Posterior vena cava (tissue), 2 donors: ENCODE measurements at regions of chr1 and their contacts with region 1.

Region 1: GRCh38 chr1:201108614-201109013 is 3.6 kb downstream of the CACNA1S start:
- DNase-seq: no peak

Region 2: DNA sequence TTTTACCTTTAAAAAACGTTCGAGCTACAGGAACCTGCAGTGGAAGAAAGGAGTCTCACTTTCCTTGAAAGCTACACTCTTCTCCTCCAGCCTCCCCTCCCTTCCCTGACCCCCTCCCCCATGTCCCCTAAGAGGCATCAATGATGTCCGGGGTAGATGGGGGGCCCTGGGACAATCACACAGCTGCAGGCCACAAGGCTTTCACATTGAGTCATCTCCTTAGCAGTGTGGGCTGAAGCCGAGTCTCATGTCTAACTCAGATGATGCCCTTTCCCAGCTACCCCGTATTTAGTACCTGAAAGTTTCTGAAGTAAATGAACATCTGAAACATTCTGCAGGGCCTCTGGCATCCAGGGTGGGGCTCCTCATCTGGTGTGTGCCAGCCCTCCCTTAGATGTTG is 242.1 kb before region 1 on chr1:
- intact Hi-C with region 1: no loop called
- DNase-seq: no peak

Region 3: DNA sequence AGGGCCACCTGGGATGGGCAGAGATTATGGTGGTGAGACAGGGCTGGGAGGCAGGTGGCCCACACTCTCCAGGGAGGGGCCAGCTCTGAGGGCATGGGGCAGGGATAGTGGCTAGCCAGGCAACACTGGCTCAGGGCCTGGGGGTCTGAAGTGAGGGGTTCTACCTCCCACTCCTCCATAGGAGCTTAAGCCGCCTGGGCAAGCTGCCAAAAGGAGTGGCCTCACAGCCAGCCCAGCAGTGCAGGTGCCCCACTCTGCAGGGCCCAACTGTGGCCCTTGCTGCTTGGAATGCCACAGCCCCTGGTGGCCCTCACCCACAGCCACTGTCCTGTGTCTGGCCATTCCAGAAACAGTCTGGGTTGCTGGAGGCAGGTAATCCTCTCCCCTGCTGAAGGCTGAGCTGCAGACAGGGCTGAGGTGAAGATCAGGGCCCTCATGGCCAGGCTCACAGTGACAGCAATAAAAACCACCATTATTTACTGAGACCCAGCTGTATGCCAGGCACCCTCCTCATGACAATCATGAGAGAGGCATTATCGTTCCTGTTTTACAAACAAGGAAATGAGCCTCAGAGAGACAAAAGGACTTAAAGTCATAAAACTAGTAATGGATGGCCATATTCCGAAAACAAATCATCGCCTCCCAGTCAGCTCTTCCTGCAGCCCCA is 116.1 kb before region 1 on chr1:
- intact Hi-C with region 1: loop called in 1 of 2 experiments (anchors 1 kb)
- DNase-seq: no peak

Region 4: DNA sequence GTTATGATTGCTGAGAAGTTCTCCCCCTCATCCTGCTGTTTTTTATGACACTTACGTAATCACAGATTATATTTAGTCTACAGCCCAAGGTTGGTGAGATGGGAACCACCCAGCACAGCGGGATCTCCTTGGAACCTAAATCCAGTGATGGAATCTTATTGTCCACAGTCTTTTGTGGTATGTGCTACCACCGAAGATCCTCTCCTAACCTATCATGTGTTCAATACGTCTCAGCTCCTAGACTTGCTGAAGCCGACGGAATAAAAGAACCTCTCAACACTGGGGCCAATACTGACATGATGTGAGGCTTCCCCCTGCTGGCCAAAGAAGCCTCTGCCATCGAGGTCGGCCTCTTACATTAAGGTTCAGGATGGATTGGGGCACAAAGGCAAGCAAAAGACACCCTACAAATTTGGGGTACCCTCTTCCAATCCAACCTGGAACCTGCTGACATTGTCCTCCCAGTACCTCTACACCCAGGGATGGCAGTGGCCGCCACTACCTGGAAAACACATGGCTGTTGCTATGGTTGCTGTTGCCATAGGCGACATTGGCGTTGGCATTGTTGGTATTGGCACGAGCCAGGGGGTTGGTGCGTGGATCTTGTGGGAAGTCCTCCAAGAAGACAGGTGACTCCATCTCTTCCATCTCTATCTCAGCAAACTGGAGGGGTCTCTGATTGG is 65.7 kb before region 1 on chr1:
- intact Hi-C with region 1: loop called in 1 of 2 experiments (anchors 10 kb)
- DNase-seq: peak; percentile 87

Region 5: GRCh38 chr1:201171063-201172036 is 62.7 kb after region 1 on chr1:
- intact Hi-C with region 1: no loop called
- DNase-seq: peak; percentile 87